Motor neuron (in vitro differentiated cells): ENCODE measurements at regions of chr9 and their contacts with region 1.

Region 1: GRCh38 chr9:17531642-17532254 is 47.1 kb upstream of the SH3GL2 start:
- ATAC-seq: peak in 3 of 8 experiments; percentile 43 to 54 (median 43)
- H3K4me3 ChIP-seq: no peak overlapping the region
- H3K27ac ChIP-seq: no peak overlapping the region
- H3K4me1 ChIP-seq: no peaks in the 10 kb centered on the region

Region 2: DNA sequence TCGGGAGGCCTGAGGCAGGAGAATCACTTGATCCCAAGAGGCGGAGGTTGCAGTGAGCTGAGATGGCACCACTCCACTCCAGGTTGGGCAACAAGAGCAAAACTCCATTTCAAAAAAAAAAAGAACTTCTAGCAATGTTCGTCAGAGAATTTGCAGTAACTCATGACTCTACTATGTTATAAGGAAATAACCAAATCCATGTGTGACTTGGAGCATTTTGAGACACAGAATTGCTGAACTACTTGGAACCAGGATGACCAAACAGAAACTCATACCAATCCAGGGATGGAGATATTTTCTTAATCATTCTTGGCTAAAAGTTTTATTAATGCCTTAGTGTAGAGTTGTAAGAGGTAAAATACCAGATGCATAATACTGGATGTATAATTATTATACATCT is 561.4 kb before region 1 on chr9:
- in situ Hi-C with region 1: no loop called
- ATAC-seq: no peak
- H3K4me3 ChIP-seq: no peak overlapping the region
- H3K27ac ChIP-seq: no peak overlapping the region
- H3K4me1 ChIP-seq: no peaks in the 10 kb centered on the region

Region 3: GRCh38 chr9:17793713-17794622 is 262.2 kb after region 1 on chr9:
- in situ Hi-C with region 1: loop called in 1 of 9 experiments (anchors 25 kb)
- ATAC-seq: peak in 4 of 8 experiments; percentile 29 to 65 (median 34)
- H3K4me3 ChIP-seq: no peak overlapping the region
- H3K27ac ChIP-seq: no peak overlapping the region
- H3K4me1 ChIP-seq: no peaks in the 10 kb centered on the region

Region 4: GRCh38 chr9:17802249-17802857 is 270.6 kb after region 1 on chr9:
- in situ Hi-C with region 1: loop called in 5 of 9 experiments (anchors 5 to 25 kb)
- ATAC-seq: no peak
- H3K4me3 ChIP-seq: no peak overlapping the region
- H3K27ac ChIP-seq: no peak overlapping the region
- H3K4me1 ChIP-seq: no peaks in the 10 kb centered on the region

Region 5: DNA sequence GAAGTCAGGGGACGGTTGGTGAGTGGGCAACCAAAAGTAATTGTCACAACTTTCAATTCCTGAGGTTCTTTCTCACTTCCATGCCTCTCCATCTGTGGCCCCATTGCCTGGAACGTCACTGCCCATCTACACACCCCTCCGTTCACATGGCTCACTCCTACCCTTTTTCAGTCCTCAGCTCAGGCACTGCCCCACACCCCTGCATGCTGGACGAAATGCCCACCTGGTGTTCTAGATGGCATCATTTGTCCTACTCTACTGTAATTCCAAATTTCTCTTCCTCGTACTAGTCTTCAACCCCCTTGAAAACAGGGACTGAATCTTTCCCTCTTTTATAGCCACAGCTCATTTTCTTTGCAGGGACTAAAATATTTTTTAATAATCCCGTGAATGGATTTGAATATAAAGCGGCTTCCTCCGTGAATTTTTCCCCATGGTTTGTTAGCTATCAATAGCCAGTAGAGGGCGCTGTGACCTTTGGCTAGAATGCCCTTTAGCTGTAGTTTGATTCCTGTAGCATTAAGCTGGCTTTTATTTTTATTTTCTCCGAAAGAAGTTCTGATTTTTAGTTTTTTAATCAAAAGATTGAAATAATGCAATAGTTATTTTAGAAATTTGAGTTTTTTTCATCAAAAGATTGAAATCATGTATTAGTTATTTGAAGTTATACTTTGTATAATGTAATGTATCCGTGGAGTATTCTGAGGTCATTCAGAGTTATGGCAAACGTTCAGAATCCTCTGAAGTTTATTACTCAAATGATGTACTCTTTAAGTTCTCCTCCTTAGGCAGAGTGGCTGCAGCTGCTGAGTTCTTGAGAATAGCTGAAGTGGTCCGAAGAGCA is 279.2 kb after region 1 on chr9:
- in situ Hi-C with region 1: loop called in 3 of 9 experiments (anchors 10 to 25 kb)
- ATAC-seq: peak in 5 of 8 experiments; percentile 35 to 63 (median 55)
- H3K4me3 ChIP-seq: no peak overlapping the region
- H3K27ac ChIP-seq: no peak overlapping the region
- H3K4me1 ChIP-seq: no peaks in the 10 kb centered on the region

Region 6: DNA sequence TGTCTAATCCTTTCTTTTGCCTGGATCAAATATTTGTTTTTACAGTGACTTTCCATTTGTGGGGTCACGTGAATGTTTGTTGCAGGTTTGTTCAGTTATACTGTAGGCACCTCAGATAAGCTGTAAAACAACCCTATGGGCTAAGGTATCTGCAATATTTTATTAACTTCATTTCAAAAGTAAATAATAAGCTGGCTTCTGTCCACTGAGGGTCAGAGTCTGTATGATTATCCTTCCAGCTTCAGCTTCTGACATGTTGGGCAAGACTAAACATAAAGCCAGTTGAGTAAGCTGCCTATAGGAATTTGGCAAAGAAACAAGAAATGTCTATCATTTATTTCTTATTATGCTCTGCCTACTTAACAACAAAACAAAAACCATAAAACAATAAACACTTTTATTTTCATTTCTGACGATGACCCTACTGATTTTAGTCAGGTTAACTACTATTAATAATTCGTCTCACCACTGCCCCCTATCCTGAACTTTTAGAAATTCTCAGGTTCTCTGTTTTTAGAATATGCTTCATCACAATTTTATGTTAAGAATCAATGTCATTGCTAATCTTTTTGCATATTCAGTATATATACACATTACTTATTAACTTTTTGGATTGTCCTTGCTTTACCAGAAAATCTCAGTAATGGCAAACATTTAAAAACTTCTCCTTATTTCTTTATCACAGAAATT is 528.6 kb after region 1 on chr9:
- in situ Hi-C with region 1: no loop called
- ATAC-seq: no peak
- H3K4me3 ChIP-seq: no peak overlapping the region
- H3K27ac ChIP-seq: no peak overlapping the region
- H3K4me1 ChIP-seq: peaks cover 0 to 4% of the 10 kb centered on the region in 2 donors

Region 7: DNA sequence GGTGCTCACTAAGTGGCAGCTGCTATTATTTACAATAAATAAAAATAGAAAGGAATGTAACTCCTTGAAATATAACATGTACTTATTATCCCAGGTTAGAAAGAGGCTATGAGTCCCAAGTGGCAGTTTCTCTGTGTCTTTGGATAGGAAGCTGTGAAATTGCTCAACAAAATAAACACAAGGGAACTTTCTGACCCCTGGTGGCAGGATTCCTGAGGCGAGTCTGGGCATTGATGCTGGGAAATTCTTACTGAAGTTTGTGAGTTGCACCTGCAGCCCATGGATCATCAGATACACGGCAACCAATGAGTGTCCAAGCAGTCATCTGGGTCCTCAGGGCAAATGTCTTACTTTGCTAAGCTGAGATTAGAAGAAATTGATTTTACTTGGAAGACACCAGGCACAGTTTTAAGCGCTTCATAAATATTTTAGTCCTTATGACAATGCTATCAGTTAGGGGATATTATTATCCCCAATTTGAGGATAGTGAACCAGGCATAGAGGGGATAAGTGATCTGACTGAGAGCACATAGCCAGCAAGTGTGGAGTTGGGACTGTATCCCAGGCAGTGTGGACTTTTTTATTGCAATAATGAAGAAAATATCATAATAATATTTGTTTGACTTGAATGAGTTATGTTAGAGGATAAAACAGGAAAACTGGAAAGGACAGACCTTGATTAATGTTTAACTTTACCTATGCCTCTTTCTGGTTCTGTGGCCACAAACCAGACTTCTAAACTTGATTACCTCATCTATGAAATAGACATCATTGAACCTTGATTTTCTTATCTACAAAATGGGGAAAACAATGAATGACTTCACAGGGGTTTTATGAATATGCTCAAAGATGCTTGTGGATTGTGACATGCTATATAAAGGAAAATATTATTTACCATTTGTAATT is 676.7 kb after region 1 on chr9:
- in situ Hi-C with region 1: loop called in 7 of 9 experiments (anchors 10 to 25 kb)
- ATAC-seq: peak in 4 of 8 experiments; percentile 40 to 67 (median 66)
- H3K4me3 ChIP-seq: no peak overlapping the region
- H3K27ac ChIP-seq: no peak overlapping the region
- H3K4me1 ChIP-seq: peaks cover 0 to 2% of the 10 kb centered on the region in 2 donors

Region 8: GRCh38 chr9:19048966-19049916 is 1517.5 kb after region 1 on chr9 and contains the start of gene RRAGA:
- in situ Hi-C with region 1: loop called in 2 of 9 experiments (anchors 25 kb)
- ATAC-seq: peak; percentile 84 to 93 (median 91)
- H3K4me3 ChIP-seq: peak within 1 kb of the TSS; percentile 72 to 91 (median 76)
- H3K27ac ChIP-seq: peak within 1 kb of the TSS; percentile 91 to 96
- H3K4me1 ChIP-seq: peaks cover 14 to 26% of the 10 kb centered on the region in 2 donors
- total RNA-seq, gene RRAGA: 34.9 to 68.4 (median 52.3) TPM